Heart right ventricle (tissue), 16 donors: ENCODE measurements at regions of chr16 and their contacts with region 1.

Region 1: DNA sequence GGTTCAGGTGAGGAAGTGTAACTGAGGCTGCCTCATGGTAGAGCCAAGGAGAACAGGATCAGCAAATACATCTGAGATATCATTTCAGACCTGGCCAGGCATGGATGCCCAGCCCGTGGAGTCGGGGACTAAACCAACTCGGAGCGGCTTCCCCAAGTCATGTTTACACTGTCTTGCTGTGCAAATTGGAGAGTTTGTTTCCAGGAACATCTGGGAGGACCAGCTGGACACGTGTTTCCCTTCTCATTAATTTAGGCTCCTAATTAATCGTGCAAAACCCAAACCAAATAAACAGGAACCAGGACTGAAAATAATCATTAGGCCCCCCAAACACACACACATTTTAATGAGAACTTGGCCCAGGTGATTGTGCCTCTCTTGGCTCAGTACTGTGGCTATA is 70.9 kb upstream of the SALL1 start:
- DNase-seq: no peak
- ATAC-seq: no peak
- H3K4me3 ChIP-seq: no peak overlapping the region
- H3K27ac ChIP-seq: no peak overlapping the region
- H3K4me1 ChIP-seq: no peaks in the 10 kb centered on the region
- H3K27me3 ChIP-seq: no peaks in the 10 kb centered on the region
- CTCF ChIP-seq: no peak

Region 2: GRCh38 chr16:51723036-51723724 is 501.2 kb after region 1 on chr16:
- intact Hi-C with region 1: loop called in 1 of 10 experiments (anchors 5 kb)
- DNase-seq: no peak
- ATAC-seq: no peak
- H3K4me3 ChIP-seq: no peak overlapping the region
- H3K27ac ChIP-seq: no peak overlapping the region
- H3K4me1 ChIP-seq: no peaks in the 10 kb centered on the region
- H3K27me3 ChIP-seq: no peaks in the 10 kb centered on the region
- CTCF ChIP-seq: no peak